ENCODE measurements at regions of chr17 and their contacts with region 1.

Region 1: DNA sequence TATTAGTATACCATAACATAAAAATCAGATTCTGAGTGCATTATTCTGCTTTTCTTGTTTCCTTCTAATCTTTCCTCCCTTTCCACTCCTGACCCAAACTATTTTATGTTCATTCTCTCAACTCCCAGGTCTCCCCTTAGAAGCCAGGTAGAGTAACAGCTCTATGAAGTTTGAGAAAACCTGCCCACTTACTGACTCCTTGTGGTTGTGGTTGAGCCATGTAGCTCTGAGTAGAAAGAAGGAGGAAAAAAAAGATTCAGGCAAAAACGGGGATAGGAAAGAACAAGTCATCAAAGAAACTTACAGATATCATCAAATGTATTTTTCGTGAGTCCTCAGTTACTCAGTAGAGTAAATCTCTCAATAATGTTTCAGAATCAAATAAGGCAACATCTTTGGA is 216.7 kb downstream of the PMP22 start:
- DNase-seq: peak; percentile 17
- H3K4me3 ChIP-seq: no peak overlapping the region
- H3K27ac ChIP-seq: no peak overlapping the region
- H3K4me1 ChIP-seq: no peaks in the 10 kb centered on the region
- H3K27me3 ChIP-seq: peaks cover 28% of the 10 kb centered on the region

Region 2: GRCh38 chr17:14986127-14986526 is 62.3 kb before region 1 on chr17:
- in situ Hi-C with region 1: loop called (anchors 10 kb)
- DNase-seq: no peak
- H3K4me3 ChIP-seq: no peak overlapping the region
- H3K27ac ChIP-seq: no peak overlapping the region
- H3K4me1 ChIP-seq: no peaks in the 10 kb centered on the region
- H3K27me3 ChIP-seq: peaks cover 15% of the 10 kb centered on the region; the same call in 1 of the 2 replicates